Cardiac septum (tissue), 1 donor: ENCODE measurements at regions of chr6 and their contacts with region 1.

Region 1: DNA sequence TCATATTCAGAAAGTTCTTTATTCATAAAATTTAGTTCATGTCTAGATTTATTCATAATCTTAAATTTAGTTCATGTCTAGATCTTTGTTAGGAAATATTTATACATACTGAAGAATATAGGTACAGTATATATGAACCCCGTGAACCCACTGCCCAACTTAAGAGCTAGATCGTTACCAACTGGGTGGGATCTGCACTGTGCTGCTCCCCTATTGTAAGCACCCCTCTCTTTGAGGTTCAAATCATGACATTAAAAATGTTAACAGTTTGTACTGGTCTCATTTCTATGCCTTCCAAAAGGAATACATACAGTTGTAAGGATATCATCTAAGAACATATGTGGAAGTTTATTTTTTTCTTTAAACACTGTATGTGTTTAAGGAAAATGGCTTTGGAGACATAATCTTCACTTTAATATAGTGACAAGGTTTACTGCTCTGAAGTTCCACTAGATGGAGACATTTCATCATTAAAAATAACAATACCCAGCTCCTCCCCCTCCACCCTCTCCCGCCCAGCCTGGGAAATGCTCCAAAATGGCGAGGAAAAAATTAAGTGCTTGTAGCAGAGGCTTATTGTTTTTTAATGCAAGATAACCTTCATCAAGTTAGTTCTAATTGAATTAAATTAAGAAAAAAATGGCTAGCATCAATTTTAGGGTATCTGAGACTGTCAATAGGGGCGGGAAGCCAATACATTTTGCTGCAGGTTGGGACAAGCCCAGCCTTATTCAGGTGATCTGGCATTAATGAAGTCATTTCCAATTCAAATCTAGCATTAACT is 104.1 kb upstream of the TRAF3IP2 start:
- DNase-seq: no peak

Region 2: GRCh38 chr6:111721753-111722154 is 11.9 kb after region 1 on chr6:
- intact Hi-C with region 1: no loop called
- DNase-seq: no peak

Region 3: DNA sequence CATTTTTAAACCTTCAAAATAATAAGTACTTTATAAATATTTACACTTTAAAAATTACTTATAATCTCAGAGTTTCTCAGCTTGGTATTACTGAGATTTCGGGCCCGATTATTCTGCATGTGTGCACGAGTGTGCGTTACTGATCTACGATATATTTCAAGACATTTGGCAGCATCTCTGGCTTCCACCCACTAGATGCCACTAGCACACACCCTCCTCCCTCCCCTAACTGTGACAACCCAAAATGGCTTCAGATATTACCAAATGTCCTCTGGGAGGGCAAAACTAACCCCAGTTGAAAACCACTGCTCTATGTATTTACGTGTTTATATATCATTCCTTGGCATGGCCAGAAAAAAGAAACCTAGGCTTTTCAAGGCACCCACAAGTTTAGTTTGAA is 67.5 kb after region 1 on chr6:
- intact Hi-C with region 1: loop called (anchors 5 kb)
- DNase-seq: no peak

Region 4: GRCh38 chr6:111873178-111874024 is 163.6 kb after region 1 on chr6 and contains the start of gene FYN:
- intact Hi-C with region 1: loop called (anchors 2 kb)
- DNase-seq: peak; percentile 99
- total RNA-seq, gene FYN: 65.3 TPM

Region 5: DNA sequence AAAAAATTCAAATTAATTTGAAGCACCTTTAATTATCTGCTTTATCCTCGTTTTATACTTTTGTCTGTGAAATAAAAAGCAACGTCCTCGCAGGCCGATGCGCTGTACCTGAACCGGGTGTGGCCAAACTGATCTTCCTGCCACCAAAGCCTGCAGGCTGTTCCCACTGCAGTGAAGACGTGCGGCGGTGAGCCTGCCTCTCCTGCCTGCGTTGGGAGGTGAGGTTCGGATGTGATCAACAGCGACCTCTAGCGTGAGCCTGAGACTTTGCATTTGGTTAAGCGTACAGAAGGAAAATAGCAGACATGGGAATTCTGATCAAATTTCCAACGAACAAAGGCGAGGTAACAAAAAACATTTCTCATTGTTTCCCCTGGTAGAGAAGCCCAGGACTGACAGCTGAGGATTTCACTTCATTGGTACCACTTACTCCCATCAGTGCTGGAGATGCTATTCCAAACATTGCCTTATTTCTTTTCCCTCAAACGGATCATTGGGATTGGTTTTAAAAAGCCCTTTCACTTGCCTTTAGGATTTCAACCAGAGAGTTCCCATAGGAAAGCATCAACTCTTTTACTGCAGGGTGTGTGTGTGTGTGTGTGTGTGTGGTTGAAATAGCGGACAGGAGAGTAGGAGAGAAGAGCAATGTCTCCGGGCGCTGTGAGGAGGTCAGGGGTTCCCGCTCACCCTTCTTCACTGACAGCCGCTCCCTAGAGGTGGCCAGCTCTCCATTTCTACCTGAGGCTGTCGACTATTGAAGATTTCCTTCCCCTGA is 287.5 kb after region 1 on chr6:
- intact Hi-C with region 1: loop called (anchors 1 kb)
- DNase-seq: peak; percentile 90

Region 6: GRCh38 chr6:112043032-112044007 is 333.5 kb after region 1 on chr6:
- intact Hi-C with region 1: loop called (anchors 1 kb)
- DNase-seq: peak; percentile 93